ENCODE measurements at regions of chr2 and their contacts with region 1.

Region 1: DNA sequence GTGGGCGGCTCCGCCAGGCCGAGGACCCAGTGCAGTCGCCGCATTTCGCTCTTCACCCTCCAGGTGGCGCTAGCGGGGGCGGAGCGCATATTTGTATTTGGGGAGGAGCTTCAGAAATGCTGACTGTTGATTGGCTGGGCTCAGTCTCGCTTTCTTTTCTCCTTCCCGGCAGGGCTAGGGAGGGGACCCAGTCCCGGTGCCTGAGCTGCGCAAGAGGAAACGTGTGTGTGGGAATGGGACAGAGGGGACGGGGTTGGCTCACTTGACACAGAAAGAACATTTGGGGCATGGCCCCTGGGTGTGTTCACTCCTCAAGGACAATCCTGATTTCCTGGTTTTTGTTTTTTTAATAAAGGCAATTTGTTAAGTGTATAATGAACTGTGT is 20.3 kb upstream of the DNMT3A start:
- DNase-seq: peak; percentile 88 to 98 (median 94)
- ATAC-seq: peak; percentile 96
- H3K4me3 ChIP-seq: peak overlapping the region; percentile 61
- H3K4me3 Mint-ChIP-seq: peak overlapping the region; percentile 90
- H3K27ac ChIP-seq: peak overlapping the region; percentile 67 to 80
- H3K27ac Mint-ChIP-seq: peak overlapping the region; percentile 84
- H3K4me1 ChIP-seq: peaks cover 21% of the 10 kb centered on the region
- H3K4me1 Mint-ChIP-seq: peaks cover 25% of the 10 kb centered on the region
- H3K27me3 ChIP-seq: no peaks in the 10 kb centered on the region
- H3K27me3 Mint-ChIP-seq: no peaks in the 10 kb centered on the region
- CTCF ChIP-seq: peak; percentile 94

Region 2: GRCh38 chr2:24971536-24972314 is 390.3 kb before region 1 on chr2 and contains the start of gene DNAJC27:
- CTCF ChIA-PET with region 1: no interaction called
- POLR2A ChIA-PET with region 1: no interaction called
- intact Hi-C with region 1: loop called (anchors 10 kb)
- DNase-seq: peak; percentile 93 to 99 (median 97)
- ATAC-seq: peak; percentile 85
- H3K4me3 ChIP-seq: peak within 1 kb of the TSS; percentile 95
- H3K4me3 Mint-ChIP-seq: peak within 1 kb of the TSS; percentile 97
- H3K27ac ChIP-seq: peak within 1 kb of the TSS; percentile 98 to 99
- H3K27ac Mint-ChIP-seq: peak within 1 kb of the TSS; percentile 100
- H3K4me1 ChIP-seq: peaks cover 20% of the 10 kb centered on the region
- H3K4me1 Mint-ChIP-seq: peaks cover 32% of the 10 kb centered on the region
- H3K27me3 ChIP-seq: no peaks in the 10 kb centered on the region
- H3K27me3 Mint-ChIP-seq: no peaks in the 10 kb centered on the region
- CTCF ChIP-seq: no peak
- total RNA-seq, gene DNAJC27: 20.0 to 23.1 TPM

Region 3: DNA sequence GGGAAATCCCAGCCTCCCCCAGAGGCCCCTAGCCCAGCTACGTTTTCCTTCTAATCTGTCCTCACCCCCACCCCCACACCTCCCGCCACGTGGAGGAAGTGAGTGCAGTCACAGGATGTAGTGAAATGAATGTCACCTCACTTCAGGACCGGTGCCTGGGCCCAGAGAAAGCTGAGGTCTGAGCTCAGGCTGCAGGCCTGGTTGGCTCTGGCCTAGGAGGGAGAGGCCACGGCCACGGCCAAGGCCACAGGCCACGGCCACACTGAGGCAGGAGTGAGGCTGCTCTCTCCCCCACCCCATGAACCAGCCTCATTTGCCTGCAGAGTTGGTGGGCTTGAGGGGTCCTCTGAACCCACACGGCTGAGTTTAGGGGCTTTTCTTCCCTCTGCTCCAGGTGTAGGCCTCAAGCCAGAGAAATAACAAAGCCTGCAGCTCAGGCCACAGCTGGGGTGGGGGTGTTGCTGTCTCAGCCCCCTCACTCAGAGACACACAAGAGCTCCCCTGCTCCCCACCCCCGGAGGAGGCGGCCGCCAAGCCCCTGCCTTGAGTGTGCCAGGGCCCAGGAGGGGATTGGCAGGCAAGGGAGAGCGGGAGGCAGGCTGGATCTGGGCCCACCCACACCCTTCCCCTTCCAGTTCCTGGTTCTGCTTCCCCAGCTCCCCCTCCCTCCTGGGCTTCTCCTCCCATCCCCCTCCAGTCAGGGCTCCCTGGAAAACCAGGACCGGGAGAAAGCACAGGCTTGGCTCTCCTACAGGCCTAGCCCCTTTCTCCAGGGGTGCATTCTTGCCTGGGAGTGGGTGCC is 47.3 kb before region 1 on chr2:
- CTCF ChIA-PET with region 1: interaction called, 11 read pairs
- POLR2A ChIA-PET with region 1: interaction called, 13 read pairs
- intact Hi-C with region 1: no loop called
- DNase-seq: peak; percentile 35 to 79 (median 61)
- ATAC-seq: peak; percentile 87
- H3K4me3 ChIP-seq: peak overlapping the region; percentile 50
- H3K4me3 Mint-ChIP-seq: peak overlapping the region; percentile 70
- H3K27ac ChIP-seq: peak overlapping the region; percentile 77 to 84
- H3K27ac Mint-ChIP-seq: peak overlapping the region; percentile 90
- H3K4me1 ChIP-seq: peaks cover 71% of the 10 kb centered on the region
- H3K4me1 Mint-ChIP-seq: peaks cover 69% of the 10 kb centered on the region
- H3K27me3 ChIP-seq: no peaks in the 10 kb centered on the region
- H3K27me3 Mint-ChIP-seq: no peaks in the 10 kb centered on the region
- CTCF ChIP-seq: no peak

Region 4: GRCh38 chr2:25331686-25332365 is 30.2 kb before region 1 on chr2:
- CTCF ChIA-PET with region 1: no interaction called
- POLR2A ChIA-PET with region 1: interaction called, 11 read pairs
- intact Hi-C with region 1: no loop called
- DNase-seq: no peak
- ATAC-seq: no peak
- H3K4me3 ChIP-seq: no peak overlapping the region
- H3K4me3 Mint-ChIP-seq: no peak overlapping the region
- H3K27ac ChIP-seq: no peak overlapping the region
- H3K27ac Mint-ChIP-seq: peak overlapping the region; percentile 46
- H3K4me1 ChIP-seq: peaks cover 67% of the 10 kb centered on the region
- H3K4me1 Mint-ChIP-seq: peaks cover 69% of the 10 kb centered on the region
- H3K27me3 ChIP-seq: no peaks in the 10 kb centered on the region
- H3K27me3 Mint-ChIP-seq: no peaks in the 10 kb centered on the region
- CTCF ChIP-seq: no peak

Region 5: DNA sequence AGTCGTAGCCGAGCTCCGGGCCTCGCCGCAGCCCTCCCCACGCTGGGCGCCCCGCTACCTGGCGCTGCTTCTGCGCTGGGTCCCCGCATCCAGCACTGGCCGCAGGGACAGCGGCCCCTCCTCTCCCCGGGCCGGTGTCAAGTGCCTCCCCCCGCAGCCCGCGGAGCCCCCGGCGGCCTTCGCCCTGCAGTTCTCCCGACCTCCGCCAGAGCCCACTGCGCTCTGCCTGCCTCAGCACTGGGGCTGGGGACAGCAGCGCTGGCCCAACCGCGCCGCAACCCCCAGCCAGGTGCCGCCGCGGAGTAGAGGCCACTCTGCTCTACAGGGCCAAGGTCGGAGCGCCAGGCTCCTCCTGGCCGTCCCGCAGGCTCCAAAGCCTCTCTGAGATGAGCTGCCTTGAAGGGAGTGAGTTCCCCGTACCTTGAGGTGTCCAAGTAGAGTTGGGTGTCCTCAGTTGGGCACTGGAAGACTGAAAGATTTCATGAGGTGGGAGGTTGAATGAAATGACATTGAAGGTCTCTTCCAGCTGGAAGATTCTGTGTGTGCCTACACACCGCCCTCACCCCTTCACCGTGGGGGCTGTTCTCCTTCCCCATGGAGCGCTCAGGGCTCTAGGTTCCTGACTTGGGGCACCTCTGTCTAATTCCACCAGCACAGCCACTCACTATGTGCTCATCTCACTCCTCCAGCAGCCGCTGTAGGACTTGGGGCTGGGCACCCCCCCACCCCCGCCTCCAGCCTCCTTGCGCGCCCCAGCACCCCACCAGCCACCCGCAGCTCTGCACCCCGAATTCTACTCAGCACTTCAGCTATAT is 19.5 kb before region 1 on chr2:
- CTCF ChIA-PET with region 1: interaction called, 16 read pairs
- POLR2A ChIA-PET with region 1: interaction called, 13 read pairs
- intact Hi-C with region 1: loop called in 1 of 2 experiments (anchors 1 kb)
- DNase-seq: peak; percentile 50 to 92 (median 70)
- ATAC-seq: peak; percentile 85
- H3K4me3 ChIP-seq: peak overlapping the region; percentile 34
- H3K4me3 Mint-ChIP-seq: peak overlapping the region; percentile 91
- H3K27ac ChIP-seq: no peak overlapping the region
- H3K27ac Mint-ChIP-seq: peak overlapping the region; percentile 24
- H3K4me1 ChIP-seq: peaks cover 37% of the 10 kb centered on the region
- H3K4me1 Mint-ChIP-seq: peaks cover 29% of the 10 kb centered on the region
- H3K27me3 ChIP-seq: peaks cover 0 to 2% of the 10 kb centered on the region in 2 experiments
- H3K27me3 Mint-ChIP-seq: no peaks in the 10 kb centered on the region
- CTCF ChIP-seq: peak; percentile 90

Region 6: DNA sequence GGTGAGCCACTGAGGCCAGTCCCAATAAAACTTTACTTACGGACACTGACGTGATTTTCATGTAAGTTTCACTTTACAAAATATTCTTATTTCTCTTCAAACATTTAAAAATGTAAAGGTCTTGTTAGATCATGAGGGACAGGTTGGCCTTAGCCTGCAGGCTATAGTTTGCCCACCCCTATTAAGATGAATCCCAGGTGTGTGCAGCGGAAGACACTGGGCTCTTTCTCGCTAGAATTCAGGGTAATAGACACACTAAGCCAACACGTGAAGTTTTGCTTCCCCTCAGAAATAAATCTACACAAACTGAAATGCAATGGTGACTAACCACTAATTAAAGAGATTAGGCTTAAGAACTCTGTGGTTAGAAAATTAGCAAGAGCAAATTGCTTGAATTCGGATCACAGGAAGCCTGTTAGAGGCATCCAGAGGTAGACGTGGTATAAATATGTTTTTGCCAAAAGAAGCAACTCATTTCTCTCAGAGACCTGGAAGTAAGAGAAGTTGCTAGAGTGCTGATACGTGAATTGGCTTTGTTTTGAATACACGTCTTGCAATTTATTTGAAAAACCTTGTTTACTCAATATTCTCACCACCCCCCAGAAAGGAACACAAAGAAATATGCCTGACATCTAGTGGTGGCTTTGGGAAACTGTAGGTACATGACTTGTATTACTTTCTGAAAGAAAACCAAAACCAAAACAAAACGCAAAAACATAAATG is 159.8 kb after region 1 on chr2:
- CTCF ChIA-PET with region 1: interaction called, 3 read pairs
- POLR2A ChIA-PET with region 1: interaction called, 5 read pairs
- intact Hi-C with region 1: loop called (anchors 1 to 5 kb)
- DNase-seq: peak in 7 of 14 experiments; percentile 16 to 87 (median 45)
- ATAC-seq: peak; percentile 100
- H3K4me3 ChIP-seq: peak overlapping the region; percentile 10
- H3K4me3 Mint-ChIP-seq: peak overlapping the region; percentile 3
- H3K27ac ChIP-seq: no peak overlapping the region
- H3K27ac Mint-ChIP-seq: peak overlapping the region; percentile 9
- H3K4me1 ChIP-seq: no peaks in the 10 kb centered on the region
- H3K4me1 Mint-ChIP-seq: peaks cover 7% of the 10 kb centered on the region
- H3K27me3 ChIP-seq: no peaks in the 10 kb centered on the region
- H3K27me3 Mint-ChIP-seq: no peaks in the 10 kb centered on the region
- CTCF ChIP-seq: peak; percentile 80